ENCODE measurements at regions of chr15 and their contacts with region 1.

Region 1: GRCh38 chr15:78241007-78241406 is 6.6 kb upstream of the ACSBG1 start:
- DNase-seq: peak; percentile 93
- H3K4me3 ChIP-seq: peak overlapping the region in 1 of 2 experiments; percentile 35; a peak in 1 of 4 replicates
- H3K27ac ChIP-seq: no peak overlapping the region
- H3K4me1 ChIP-seq: peaks cover 0 to 12% of the 10 kb centered on the region in 2 experiments; a peak in 1 of 4 replicates
- H3K27me3 ChIP-seq: peaks cover 5% of the 10 kb centered on the region; the same call in 1 of the 2 replicates
- CTCF ChIP-seq: peak; percentile 88
- EP300 ChIP-seq: peak in 1 of 2 experiments; percentile 13; a peak in 1 of 4 replicates
- RAD21 ChIP-seq: peak; percentile 95

Region 2: DNA sequence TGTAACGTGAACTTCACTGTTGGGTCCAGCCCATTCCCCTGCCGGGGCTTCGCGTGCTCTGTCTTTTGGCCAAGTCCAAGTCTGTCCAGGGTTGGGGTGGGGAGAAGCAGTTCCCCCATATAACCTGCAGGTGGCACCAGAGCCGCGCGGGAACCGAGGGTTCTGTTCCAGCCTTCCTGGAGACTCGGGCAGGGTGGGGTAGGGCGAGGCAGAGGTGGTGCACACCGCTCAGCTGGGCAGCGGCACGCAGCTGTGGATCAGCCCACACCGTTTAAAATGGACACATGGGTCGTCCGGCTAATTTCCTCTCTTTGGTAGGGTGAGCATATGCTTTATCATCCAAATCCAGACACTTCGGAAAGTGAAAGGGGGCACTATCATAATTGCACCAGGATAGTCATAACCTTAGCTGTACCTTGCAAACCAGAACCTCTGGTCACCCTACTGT is 281.6 kb before region 1 on chr15:
- CTCF ChIA-PET with region 1: interaction called, 40 read pairs
- POLR2A ChIA-PET with region 1: no interaction called
- DNase-seq: peak; percentile 91
- H3K4me3 ChIP-seq: peak overlapping the region; percentile 29 to 39; a peak in 2 of 4 replicates
- H3K27ac ChIP-seq: no peak overlapping the region
- H3K4me1 ChIP-seq: no peaks in the 10 kb centered on the region; a peak in 1 of 4 replicates
- H3K27me3 ChIP-seq: peaks cover 10% of the 10 kb centered on the region; the same call in 1 of the 2 replicates
- CTCF ChIP-seq: peak; percentile 90
- EP300 ChIP-seq: no peak
- RAD21 ChIP-seq: peak; percentile 93

Region 3: DNA sequence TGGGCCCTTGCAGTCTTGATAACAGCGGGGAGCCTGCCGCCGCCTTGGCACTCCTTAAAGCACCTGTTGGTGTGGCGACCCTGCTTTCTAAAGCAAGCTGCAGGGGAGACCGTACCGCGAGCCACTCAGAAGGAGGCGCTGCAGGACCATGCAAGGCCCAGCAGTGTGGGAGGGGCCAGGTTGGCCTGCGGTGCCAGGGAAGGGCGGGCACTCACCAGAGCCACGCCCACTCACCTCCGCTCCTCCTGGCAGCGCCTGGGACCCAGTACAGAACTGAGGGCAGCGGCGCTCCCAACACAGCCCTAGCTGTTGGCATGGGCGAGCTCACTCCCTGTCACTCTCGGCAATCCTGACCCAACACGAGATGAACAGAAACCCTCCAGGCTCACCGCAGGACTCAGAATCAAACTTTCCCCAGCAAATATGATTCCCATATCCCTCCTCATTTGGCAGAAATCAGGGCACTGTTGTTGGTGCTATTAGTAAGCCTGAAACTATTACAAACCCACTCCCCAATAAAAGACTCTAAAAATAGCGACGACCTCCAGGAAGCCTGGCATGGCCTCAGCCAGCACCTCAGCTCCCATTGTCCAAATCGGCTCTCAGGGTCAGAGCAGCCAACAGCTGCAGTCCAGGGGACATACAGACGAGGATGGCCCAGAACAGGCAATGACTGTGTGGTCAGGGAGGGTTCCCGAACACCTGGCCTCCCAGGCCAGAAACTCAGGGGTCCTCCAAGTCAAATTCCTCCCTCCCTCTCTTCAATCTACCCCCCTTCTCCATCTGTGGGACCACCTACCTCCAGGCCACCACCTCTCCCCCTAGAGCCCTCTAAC is 240.7 kb before region 1 on chr15:
- CTCF ChIA-PET with region 1: interaction called, 10 read pairs
- POLR2A ChIA-PET with region 1: no interaction called
- DNase-seq: peak; percentile 80
- H3K4me3 ChIP-seq: no peak overlapping the region; a peak in 1 of 4 replicates
- H3K27ac ChIP-seq: no peak overlapping the region; a peak in 1 of 4 replicates
- H3K4me1 ChIP-seq: peaks cover 8 to 62% of the 10 kb centered on the region in 2 experiments; a peak in 3 of 4 replicates
- H3K27me3 ChIP-seq: no peaks in the 10 kb centered on the region
- CTCF ChIP-seq: peak; percentile 51
- EP300 ChIP-seq: no peak
- RAD21 ChIP-seq: peak; percentile 75

Region 4: DNA sequence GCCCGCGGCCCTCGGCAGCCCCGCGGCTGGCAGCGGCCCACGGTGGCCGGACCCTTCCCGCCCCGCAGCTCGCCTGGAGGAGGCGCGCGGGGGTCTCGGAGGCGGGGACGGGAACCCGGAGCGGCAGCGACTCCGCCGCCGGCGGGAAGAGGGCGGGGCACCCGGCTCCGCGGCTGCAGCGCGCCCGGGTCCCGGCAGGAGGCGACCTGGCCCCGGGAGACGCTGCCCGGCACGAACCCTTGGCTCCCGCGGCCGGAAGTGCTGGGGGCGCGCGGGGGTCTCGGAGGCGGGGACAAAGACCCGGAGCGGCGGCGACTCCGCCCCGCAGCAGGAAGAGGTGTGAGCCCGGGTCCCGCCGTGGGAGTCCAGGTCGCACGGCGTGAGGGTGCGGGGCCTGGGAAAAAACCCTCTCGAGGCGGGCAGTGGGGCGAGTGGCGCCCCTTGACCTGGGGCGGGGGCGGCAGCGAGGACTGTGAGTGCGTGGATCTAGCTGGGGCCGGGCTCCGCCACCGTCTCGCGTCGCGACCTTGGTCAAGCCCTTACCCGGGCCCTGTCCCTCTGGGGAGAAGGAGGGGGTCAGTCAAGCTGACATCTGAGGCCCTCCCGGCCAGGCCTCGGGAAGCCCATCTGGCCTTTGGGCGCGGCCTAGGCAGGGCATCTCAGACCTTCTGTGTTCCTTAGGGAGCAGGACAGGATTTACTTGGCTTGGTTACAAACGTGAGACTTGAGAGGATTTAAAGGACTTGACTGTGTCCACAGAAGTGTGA is 109.5 kb before region 1 on chr15 and contains the start of gene CIB2:
- CTCF ChIA-PET with region 1: interaction called, 72 read pairs
- POLR2A ChIA-PET with region 1: interaction called, 3 read pairs
- DNase-seq: peak; percentile 99
- H3K4me3 ChIP-seq: peak within 1 kb of the TSS; percentile 68 to 81
- H3K27ac ChIP-seq: peak within 1 kb of the TSS; percentile 48 to 74
- H3K4me1 ChIP-seq: peaks cover 0 to 7% of the 10 kb centered on the region in 2 experiments; a peak in 1 of 4 replicates
- H3K27me3 ChIP-seq: no peaks in the 10 kb centered on the region
- CTCF ChIP-seq: peak; percentile 57
- EP300 ChIP-seq: peak in 1 of 2 experiments; percentile 10; a peak in 1 of 4 replicates
- RAD21 ChIP-seq: peak; percentile 62
- polyA plus RNA-seq, gene CIB2: 39.6 and 40.8 TPM in 2 replicates

Region 5: DNA sequence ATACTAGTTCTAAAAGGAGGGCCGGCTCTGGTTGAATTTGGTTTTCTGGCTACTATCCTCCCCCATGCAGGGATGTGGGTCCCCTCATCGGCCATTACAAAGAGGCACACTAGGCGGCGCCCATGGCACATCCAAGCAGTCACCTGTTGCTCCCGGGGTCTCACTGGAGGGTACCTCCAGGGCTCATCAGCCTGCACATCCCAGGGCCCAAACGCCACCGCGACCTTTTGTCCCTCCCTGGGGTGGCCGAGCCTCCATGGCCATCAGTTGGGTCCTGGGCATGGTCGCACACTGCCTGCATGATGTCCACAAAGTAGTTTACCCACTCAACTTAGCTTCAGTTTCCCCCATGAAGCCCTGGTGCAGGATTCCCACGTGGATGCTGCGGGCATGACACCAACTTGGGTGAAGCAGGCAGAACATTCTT is 63.5 kb before region 1 on chr15:
- CTCF ChIA-PET with region 1: interaction called, 71 read pairs
- POLR2A ChIA-PET with region 1: no interaction called
- DNase-seq: peak; percentile 78
- H3K4me3 ChIP-seq: no peak overlapping the region; a peak in 1 of 4 replicates
- H3K27ac ChIP-seq: no peak overlapping the region
- H3K4me1 ChIP-seq: no peaks in the 10 kb centered on the region; a peak in 1 of 4 replicates
- H3K27me3 ChIP-seq: no peaks in the 10 kb centered on the region
- CTCF ChIP-seq: peak; percentile 84
- EP300 ChIP-seq: no peak
- RAD21 ChIP-seq: peak; percentile 75

Region 6: GRCh38 chr15:78195735-78196201 is 45.2 kb before region 1 on chr15:
- CTCF ChIA-PET with region 1: interaction called, 48 read pairs
- POLR2A ChIA-PET with region 1: no interaction called
- DNase-seq: peak; percentile 80
- H3K4me3 ChIP-seq: no peak overlapping the region
- H3K27ac ChIP-seq: no peak overlapping the region
- H3K4me1 ChIP-seq: no peaks in the 10 kb centered on the region
- H3K27me3 ChIP-seq: no peaks in the 10 kb centered on the region
- CTCF ChIP-seq: peak; percentile 62
- EP300 ChIP-seq: no peak
- RAD21 ChIP-seq: peak; percentile 72

Region 7: DNA sequence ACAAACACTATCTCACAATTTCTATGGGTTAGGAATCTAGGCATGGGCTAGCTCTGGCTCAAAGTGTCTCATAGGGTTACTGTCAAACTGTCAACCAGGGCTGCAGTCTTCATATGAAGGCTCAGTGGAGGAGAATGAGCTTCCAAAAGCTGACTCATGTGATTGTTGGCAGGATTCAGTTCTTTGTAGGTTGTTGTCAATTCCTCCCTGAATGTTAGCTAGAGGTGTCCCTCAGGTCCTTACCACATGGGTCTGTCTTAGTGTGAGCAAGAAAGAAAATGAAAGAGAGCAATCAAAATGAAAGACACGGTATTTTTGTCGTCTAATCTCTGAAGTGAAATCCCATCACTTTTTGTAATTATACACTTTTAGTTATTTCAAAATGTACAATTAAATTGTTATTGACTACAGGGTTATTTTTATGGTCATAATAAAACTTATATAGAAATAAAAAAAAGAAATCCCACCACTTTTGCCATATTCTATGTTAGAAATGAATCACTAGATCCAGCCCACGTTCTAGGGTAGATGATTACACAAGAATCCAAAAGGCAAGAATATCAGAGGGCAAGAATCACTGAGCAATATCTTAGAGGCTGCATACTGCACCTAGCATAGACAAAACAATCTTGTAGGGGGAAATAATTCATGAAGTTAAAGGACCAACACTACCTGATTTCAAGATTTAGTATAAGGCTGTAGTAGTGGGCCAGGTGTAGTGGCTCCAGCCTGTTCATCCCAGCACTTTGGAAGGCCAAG is 15.0 kb before region 1 on chr15:
- CTCF ChIA-PET with region 1: interaction called, 54 read pairs
- POLR2A ChIA-PET with region 1: no interaction called
- DNase-seq: no peak
- H3K4me3 ChIP-seq: no peak overlapping the region
- H3K27ac ChIP-seq: no peak overlapping the region
- H3K4me1 ChIP-seq: no peaks in the 10 kb centered on the region
- H3K27me3 ChIP-seq: no peaks in the 10 kb centered on the region
- CTCF ChIP-seq: no peak
- EP300 ChIP-seq: no peak
- RAD21 ChIP-seq: no peak

Region 8: DNA sequence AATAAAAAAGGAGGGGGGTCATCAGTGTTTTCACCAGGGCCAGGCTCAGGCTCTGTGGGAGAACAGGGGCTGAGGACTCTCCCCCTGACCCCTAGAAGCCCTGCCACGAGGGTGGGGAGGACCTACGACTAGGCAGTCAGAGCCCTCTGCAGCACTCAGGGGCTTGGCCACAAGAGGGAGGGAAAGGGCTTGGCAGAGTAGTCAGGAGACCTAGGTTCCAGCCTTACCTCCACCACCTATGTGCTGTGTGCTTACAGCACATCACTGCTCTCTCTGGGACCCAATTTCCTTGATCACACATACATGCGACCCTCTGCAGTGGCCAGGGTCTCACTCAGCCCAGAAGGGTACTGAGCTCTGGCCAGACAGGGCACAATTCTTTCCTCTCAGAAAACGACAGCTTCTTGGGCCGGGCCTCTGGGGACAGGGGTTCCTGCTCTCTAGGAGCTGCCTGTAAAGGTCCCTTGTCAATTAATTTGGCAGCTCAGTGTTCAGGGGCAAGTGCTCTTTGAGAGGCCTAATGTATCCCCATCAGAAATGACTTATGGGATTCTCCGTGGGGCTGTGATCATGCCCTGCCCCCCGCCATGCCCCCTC is 74.8 kb after region 1 on chr15:
- CTCF ChIA-PET with region 1: no interaction called
- POLR2A ChIA-PET with region 1: no interaction called
- DNase-seq: peak; percentile 62
- H3K4me3 ChIP-seq: no peak overlapping the region
- H3K27ac ChIP-seq: peak overlapping the region in 1 of 2 experiments; percentile 63; a peak in 2 of 4 replicates
- H3K4me1 ChIP-seq: peaks cover 0 to 16% of the 10 kb centered on the region in 2 experiments; a peak in 1 of 4 replicates
- H3K27me3 ChIP-seq: no peaks in the 10 kb centered on the region
- CTCF ChIP-seq: peak; percentile 38
- EP300 ChIP-seq: no peak
- RAD21 ChIP-seq: peak; percentile 69

Measured in SK-N-SH (cell line).